ENCODE measurements at regions of chrX and their contacts with region 1.

Region 1: DNA sequence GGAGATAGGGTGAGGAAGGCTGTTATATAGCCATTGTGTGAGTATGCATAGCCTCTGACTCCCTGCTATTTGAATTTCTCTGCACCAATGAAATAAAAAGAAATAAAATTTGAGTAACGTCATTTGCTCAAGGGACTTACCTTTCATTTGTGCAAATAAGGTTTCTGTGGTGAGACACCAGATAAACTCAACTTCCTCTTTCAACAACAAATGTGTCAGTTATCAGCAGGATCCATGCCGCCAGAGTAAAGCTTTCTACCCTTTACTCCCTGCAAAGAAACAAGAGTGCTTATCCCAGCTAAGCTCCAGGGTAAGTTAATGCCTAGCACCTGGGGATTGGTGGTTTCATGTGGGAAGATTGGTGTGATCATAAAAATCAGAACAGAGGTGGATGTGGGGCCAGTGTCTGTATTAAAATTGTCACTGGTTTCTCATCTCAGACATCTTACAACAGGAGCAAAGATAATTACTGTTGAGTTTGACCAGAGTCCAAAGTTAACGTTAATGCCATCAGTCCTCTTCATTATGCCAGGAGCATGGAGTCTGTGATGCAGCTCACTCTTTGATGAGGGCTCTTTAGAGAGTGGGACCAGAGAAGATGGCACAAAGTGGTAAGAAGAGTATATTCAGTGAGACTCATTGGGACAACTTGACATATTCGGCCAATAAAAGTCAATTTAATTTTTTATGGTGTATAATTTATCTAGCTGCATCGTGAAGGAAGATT is at the start of gene P2RY10:
- DNase-seq: peak; percentile 45
- H3K4me3 Mint-ChIP-seq: peak within 1 kb of the TSS; percentile 94
- H3K27ac Mint-ChIP-seq: peak within 1 kb of the TSS; percentile 98
- H3K4me1 Mint-ChIP-seq: peaks cover 54% of the 10 kb centered on the region
- H3K27me3 Mint-ChIP-seq: no peaks in the 10 kb centered on the region
- total RNA-seq, gene P2RY10: 61.9 to 63.3 TPM

Region 2: DNA sequence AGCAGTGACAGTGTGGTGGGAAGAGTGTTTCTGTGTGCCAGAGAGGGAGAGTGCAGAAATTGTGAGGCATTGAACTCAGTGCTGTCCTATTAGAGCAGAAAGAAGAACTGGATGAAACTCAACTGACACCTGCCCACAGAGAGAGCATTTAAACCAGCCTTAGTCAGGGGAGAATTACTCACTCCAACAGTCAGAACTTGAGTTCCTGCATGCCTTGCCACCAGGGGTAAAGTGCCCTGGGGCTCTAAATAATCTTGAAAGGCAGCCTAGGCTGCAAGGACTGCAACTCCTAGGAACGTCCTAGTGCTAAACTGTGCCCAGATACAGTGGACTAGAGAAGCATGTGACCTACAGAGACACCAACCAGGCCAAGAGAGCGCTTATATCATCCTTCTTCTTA is 630.8 kb before region 1 on chrX:
- CTCF ChIA-PET with region 1: no interaction called
- intact Hi-C with region 1: loop called (anchors 5 kb)
- DNase-seq: peak; percentile 42
- H3K4me3 Mint-ChIP-seq: no peak overlapping the region
- H3K27ac Mint-ChIP-seq: peak overlapping the region; percentile 26
- H3K4me1 Mint-ChIP-seq: peaks cover 62% of the 10 kb centered on the region
- H3K27me3 Mint-ChIP-seq: no peaks in the 10 kb centered on the region

Region 3: GRCh38 chrX:78653118-78653822 is 292.1 kb before region 1 on chrX:
- CTCF ChIA-PET with region 1: no interaction called
- intact Hi-C with region 1: loop called (anchors 5 kb)
- DNase-seq: no peak
- H3K4me3 Mint-ChIP-seq: no peak overlapping the region
- H3K27ac Mint-ChIP-seq: no peak overlapping the region
- H3K4me1 Mint-ChIP-seq: peaks cover 15% of the 10 kb centered on the region
- H3K27me3 Mint-ChIP-seq: no peaks in the 10 kb centered on the region

Region 4: GRCh38 chrX:78687586-78687985 is 257.8 kb before region 1 on chrX:
- CTCF ChIA-PET with region 1: no interaction called
- intact Hi-C with region 1: no loop called
- DNase-seq: no peak
- H3K4me3 Mint-ChIP-seq: no peak overlapping the region
- H3K27ac Mint-ChIP-seq: no peak overlapping the region
- H3K4me1 Mint-ChIP-seq: no peaks in the 10 kb centered on the region
- H3K27me3 Mint-ChIP-seq: no peaks in the 10 kb centered on the region

Region 5: GRCh38 chrX:78979789-78980464 is 34.6 kb after region 1 on chrX:
- CTCF ChIA-PET with region 1: no interaction called
- intact Hi-C with region 1: loop called (anchors 1 kb)
- DNase-seq: peak; percentile 17
- H3K4me3 Mint-ChIP-seq: peak overlapping the region; percentile 55
- H3K27ac Mint-ChIP-seq: peak overlapping the region; percentile 95
- H3K4me1 Mint-ChIP-seq: peaks cover 21% of the 10 kb centered on the region
- H3K27me3 Mint-ChIP-seq: no peaks in the 10 kb centered on the region

Region 6: DNA sequence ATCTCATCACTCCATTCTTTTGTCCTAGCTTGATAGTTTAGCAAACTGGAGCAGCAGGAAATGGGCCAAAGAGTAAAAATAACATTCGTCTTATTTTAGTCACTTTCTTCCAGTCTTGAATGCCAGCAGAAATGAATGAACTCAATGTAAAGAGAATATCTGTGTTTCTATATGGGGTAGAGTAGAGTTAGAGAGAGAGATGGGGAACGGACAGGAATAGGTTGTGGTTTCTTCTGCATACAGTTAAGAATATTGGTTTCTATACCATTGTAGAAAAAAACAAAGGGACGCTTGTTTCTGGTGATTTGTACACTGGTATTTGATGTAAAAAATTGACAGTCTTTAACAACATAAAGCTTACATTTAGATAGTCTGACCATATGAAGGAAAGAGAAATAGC is 208.0 kb after region 1 on chrX:
- CTCF ChIA-PET with region 1: no interaction called
- intact Hi-C with region 1: loop called (anchors 2 kb)
- DNase-seq: no peak
- H3K4me3 Mint-ChIP-seq: peak overlapping the region; percentile 72
- H3K27ac Mint-ChIP-seq: peak overlapping the region; percentile 96
- H3K4me1 Mint-ChIP-seq: peaks cover 53% of the 10 kb centered on the region
- H3K27me3 Mint-ChIP-seq: no peaks in the 10 kb centered on the region

Region 7: GRCh38 chrX:79231662-79232061 is 286.3 kb after region 1 on chrX:
- CTCF ChIA-PET with region 1: no interaction called
- intact Hi-C with region 1: no loop called
- DNase-seq: no peak
- H3K4me3 Mint-ChIP-seq: peak overlapping the region; percentile 52
- H3K27ac Mint-ChIP-seq: no peak overlapping the region
- H3K4me1 Mint-ChIP-seq: peaks cover 63% of the 10 kb centered on the region
- H3K27me3 Mint-ChIP-seq: no peaks in the 10 kb centered on the region

Region 8: GRCh38 chrX:79259073-79259689 is 313.8 kb after region 1 on chrX:
- CTCF ChIA-PET with region 1: no interaction called
- intact Hi-C with region 1: loop called (anchors 2 kb)
- DNase-seq: peak; percentile 68
- H3K4me3 Mint-ChIP-seq: peak overlapping the region; percentile 58
- H3K27ac Mint-ChIP-seq: peak overlapping the region; percentile 91
- H3K4me1 Mint-ChIP-seq: peaks cover 83% of the 10 kb centered on the region
- H3K27me3 Mint-ChIP-seq: no peaks in the 10 kb centered on the region

Region 9: GRCh38 chrX:79412972-79413371 is 467.6 kb after region 1 on chrX:
- CTCF ChIA-PET with region 1: no interaction called
- intact Hi-C with region 1: loop called (anchors 5 kb)
- DNase-seq: no peak
- H3K4me3 Mint-ChIP-seq: peak overlapping the region; percentile 66
- H3K27ac Mint-ChIP-seq: peak overlapping the region; percentile 69
- H3K4me1 Mint-ChIP-seq: peaks cover 21% of the 10 kb centered on the region
- H3K27me3 Mint-ChIP-seq: no peaks in the 10 kb centered on the region